ENCODE measurements at regions of chr13 and their contacts with region 1.

Region 1: GRCh38 chr13:41054212-41054877 is 7.0 kb upstream of the WBP4 start:
- DNase-seq: peak; percentile 72
- ATAC-seq: peak; percentile 34
- H3K4me3 ChIP-seq: peak overlapping the region in 1 of 5 experiments; percentile 38
- H3K4me3 Mint-ChIP-seq: peak overlapping the region; percentile 82
- H3K27ac ChIP-seq: peak overlapping the region in 1 of 2 donors; percentile 53
- H3K27ac Mint-ChIP-seq: peak overlapping the region; percentile 90
- H3K4me1 ChIP-seq: peaks cover 29 to 30% of the 10 kb centered on the region in 2 donors
- H3K4me1 Mint-ChIP-seq: peaks cover 64% of the 10 kb centered on the region
- H3K27me3 ChIP-seq: no peaks in the 10 kb centered on the region
- H3K27me3 Mint-ChIP-seq: no peaks in the 10 kb centered on the region
- CTCF ChIP-seq: peak; percentile 71

Region 2: GRCh38 chr13:40910324-40911050 is 143.9 kb before region 1 on chr13:
- CTCF ChIA-PET with region 1: no interaction called
- POLR2A ChIA-PET with region 1: no interaction called
- intact Hi-C with region 1: no loop called
- DNase-seq: no peak
- ATAC-seq: no peak
- H3K4me3 ChIP-seq: no peak overlapping the region
- H3K4me3 Mint-ChIP-seq: no peak overlapping the region
- H3K27ac ChIP-seq: no peak overlapping the region
- H3K27ac Mint-ChIP-seq: no peak overlapping the region
- H3K4me1 ChIP-seq: no peaks in the 10 kb centered on the region
- H3K4me1 Mint-ChIP-seq: peaks cover 2% of the 10 kb centered on the region
- H3K27me3 ChIP-seq: no peaks in the 10 kb centered on the region
- H3K27me3 Mint-ChIP-seq: no peaks in the 10 kb centered on the region
- CTCF ChIP-seq: no peak

Region 3: DNA sequence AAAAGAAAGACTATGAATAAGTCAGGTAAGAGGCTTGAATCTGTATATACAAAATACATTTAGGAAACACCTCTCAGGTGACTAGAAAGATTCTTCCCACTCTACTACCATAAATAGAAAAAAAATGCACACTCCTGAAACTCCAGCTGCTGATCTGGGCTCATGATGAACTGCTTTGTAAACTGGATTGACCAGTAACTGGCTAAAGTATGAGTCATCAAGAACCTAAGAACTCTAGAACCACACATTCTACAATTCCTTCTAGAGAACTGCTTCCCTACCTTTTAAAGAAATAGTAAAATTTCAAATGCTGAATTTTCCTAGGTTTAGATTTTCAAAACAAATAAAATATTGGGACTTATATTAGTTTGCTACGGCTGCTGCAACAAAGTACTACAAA is 90.4 kb before region 1 on chr13:
- CTCF ChIA-PET with region 1: interaction called, 15 read pairs
- POLR2A ChIA-PET with region 1: no interaction called
- intact Hi-C with region 1: no loop called
- DNase-seq: no peak
- ATAC-seq: no peak
- H3K4me3 ChIP-seq: no peak overlapping the region
- H3K4me3 Mint-ChIP-seq: peak overlapping the region; percentile 12
- H3K27ac ChIP-seq: peak overlapping the region in 1 of 2 donors; percentile 54
- H3K27ac Mint-ChIP-seq: peak overlapping the region; percentile 46
- H3K4me1 ChIP-seq: peaks cover 72 to 86% of the 10 kb centered on the region in 2 donors
- H3K4me1 Mint-ChIP-seq: peaks cover 83% of the 10 kb centered on the region
- H3K27me3 ChIP-seq: no peaks in the 10 kb centered on the region
- H3K27me3 Mint-ChIP-seq: no peaks in the 10 kb centered on the region
- CTCF ChIP-seq: no peak

Region 4: GRCh38 chr13:41011382-41011956 is 42.9 kb before region 1 on chr13:
- CTCF ChIA-PET with region 1: interaction called, 63 read pairs
- POLR2A ChIA-PET with region 1: interaction called, 4 read pairs
- intact Hi-C with region 1: no loop called
- DNase-seq: no peak
- ATAC-seq: no peak
- H3K4me3 ChIP-seq: peak overlapping the region in 1 of 5 experiments; percentile 10
- H3K4me3 Mint-ChIP-seq: peak overlapping the region; percentile 47
- H3K27ac ChIP-seq: no peak overlapping the region
- H3K27ac Mint-ChIP-seq: peak overlapping the region; percentile 32
- H3K4me1 ChIP-seq: peaks cover 62 to 81% of the 10 kb centered on the region in 2 donors
- H3K4me1 Mint-ChIP-seq: peaks cover 65% of the 10 kb centered on the region
- H3K27me3 ChIP-seq: no peaks in the 10 kb centered on the region
- H3K27me3 Mint-ChIP-seq: no peaks in the 10 kb centered on the region
- CTCF ChIP-seq: no peak

Region 5: DNA sequence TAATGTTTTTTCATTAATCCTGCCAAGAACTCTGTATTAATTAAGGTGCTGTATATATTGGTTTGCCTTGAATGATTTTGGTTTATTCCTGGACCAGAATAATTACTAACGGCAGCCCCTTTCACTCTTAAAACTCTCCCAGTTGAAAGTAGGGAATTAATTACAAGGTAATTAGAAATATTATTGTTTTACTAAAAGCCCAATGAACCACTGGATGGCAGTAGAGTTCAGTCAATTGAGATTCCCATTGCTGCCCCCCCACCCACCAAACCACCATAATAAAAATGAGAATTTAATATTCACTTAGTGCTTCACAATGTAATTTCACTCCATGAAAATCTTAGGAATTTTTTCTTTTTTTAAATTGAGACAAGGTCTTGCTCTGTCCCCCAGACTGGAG is 20.7 kb after region 1 on chr13:
- CTCF ChIA-PET with region 1: interaction called, 18 read pairs
- POLR2A ChIA-PET with region 1: interaction called, 3 read pairs
- intact Hi-C with region 1: no loop called
- DNase-seq: peak; percentile 71
- ATAC-seq: peak; percentile 43
- H3K4me3 ChIP-seq: no peak overlapping the region
- H3K4me3 Mint-ChIP-seq: no peak overlapping the region
- H3K27ac ChIP-seq: no peak overlapping the region
- H3K27ac Mint-ChIP-seq: no peak overlapping the region
- H3K4me1 ChIP-seq: no peaks in the 10 kb centered on the region
- H3K4me1 Mint-ChIP-seq: peaks cover 5% of the 10 kb centered on the region
- H3K27me3 ChIP-seq: no peaks in the 10 kb centered on the region
- H3K27me3 Mint-ChIP-seq: no peaks in the 10 kb centered on the region
- CTCF ChIP-seq: peak; percentile 79